PC-3 (cell line): ENCODE measurements at regions of chr9 and their contacts with region 1.

Region 1: GRCh38 chr9:101907466-101907865 is 169.0 kb upstream of the GRIN3A start:
- DNase-seq: no peak
- ATAC-seq: no peak; the same call in 1 of the 2 replicates
- H3K4me3 ChIP-seq: no peak overlapping the region
- H3K27ac ChIP-seq: no peak overlapping the region
- H3K4me1 ChIP-seq: no peaks in the 10 kb centered on the region
- H3K27me3 ChIP-seq: no peaks in the 10 kb centered on the region
- CTCF ChIP-seq: no peak

Region 2: DNA sequence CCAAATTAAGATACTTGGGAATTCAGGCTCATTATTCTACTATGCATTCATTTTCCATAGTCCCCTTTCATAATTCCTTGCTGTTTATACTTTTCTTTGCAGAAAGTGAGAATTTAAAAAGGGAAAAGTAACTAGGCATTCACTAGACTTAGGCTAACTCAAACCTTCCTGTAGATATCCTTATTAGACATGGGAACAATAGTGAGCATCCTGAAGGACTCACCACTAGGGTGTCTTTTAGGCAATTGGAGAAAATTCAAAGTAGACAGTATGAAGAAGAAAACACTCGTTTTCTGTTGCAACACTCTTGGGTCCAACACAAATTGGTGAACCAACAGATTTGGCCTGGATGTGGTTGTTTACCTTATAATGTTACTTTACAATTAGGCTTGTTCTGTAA is 44.1 kb after region 1 on chr9:
- CTCF ChIA-PET with region 1: no interaction called
- POLR2A ChIA-PET with region 1: no interaction called
- intact Hi-C with region 1: no loop called
- DNase-seq: no peak
- ATAC-seq: no peak
- H3K4me3 ChIP-seq: no peak overlapping the region
- H3K27ac ChIP-seq: no peak overlapping the region
- H3K4me1 ChIP-seq: no peaks in the 10 kb centered on the region
- H3K27me3 ChIP-seq: no peaks in the 10 kb centered on the region
- CTCF ChIP-seq: no peak

Region 3: GRCh38 chr9:101966691-101967090 is 59.2 kb after region 1 on chr9:
- CTCF ChIA-PET with region 1: no interaction called
- POLR2A ChIA-PET with region 1: no interaction called
- intact Hi-C with region 1: loop called (anchors 10 kb)
- DNase-seq: no peak
- ATAC-seq: no peak
- H3K4me3 ChIP-seq: no peak overlapping the region
- H3K27ac ChIP-seq: no peak overlapping the region
- H3K4me1 ChIP-seq: no peaks in the 10 kb centered on the region
- H3K27me3 ChIP-seq: no peaks in the 10 kb centered on the region
- CTCF ChIP-seq: no peak